ENCODE measurements at regions of chr5 and their contacts with region 1.

Region 1: DNA sequence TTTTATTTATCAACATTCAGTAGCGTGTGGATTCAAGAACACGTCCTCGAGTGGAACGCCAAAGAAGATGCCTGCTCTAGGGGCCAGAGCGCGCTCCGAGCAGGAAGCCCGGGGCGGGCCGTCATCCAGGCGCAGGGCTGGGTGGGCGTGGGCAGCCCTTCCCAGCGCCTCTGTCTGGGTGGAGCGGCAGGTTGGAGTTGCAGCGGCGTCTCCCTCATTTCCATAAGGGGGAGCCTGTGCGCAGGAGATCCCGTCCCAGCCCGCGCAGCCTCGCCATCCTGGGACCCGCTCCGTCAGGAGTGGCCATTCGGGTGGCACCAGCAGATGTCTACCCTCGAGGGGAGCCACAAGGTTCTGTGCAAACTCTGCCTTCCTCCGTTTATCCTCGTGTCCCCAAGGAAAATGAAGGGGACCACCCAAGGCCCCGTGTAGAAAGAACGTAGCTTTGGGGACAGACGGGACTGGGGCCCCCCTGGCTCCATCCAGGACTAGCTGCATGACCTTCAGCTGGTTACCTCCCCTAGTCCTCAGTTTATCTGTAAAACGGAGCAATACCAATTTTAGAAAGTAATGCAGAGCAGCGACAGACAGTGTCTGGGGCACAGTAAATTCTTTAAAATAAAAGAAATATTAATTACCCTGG is 155.5 kb upstream of the SMIM23 start:
- DNase-seq: peak; percentile 54
- H3K4me3 ChIP-seq: peak overlapping the region; percentile 27
- H3K27ac ChIP-seq: no peak overlapping the region
- H3K27me3 ChIP-seq: peaks cover 4% of the 10 kb centered on the region
- CTCF ChIP-seq: peak; percentile 83

Region 2: GRCh38 chr5:171418316-171418981 is 211.7 kb before region 1 on chr5:
- in situ Hi-C with region 1: loop called (anchors 25 kb)
- DNase-seq: peak; percentile 79
- H3K4me3 ChIP-seq: peak overlapping the region; percentile 40
- H3K27ac ChIP-seq: no peak overlapping the region
- H3K27me3 ChIP-seq: peaks cover 10% of the 10 kb centered on the region
- CTCF ChIP-seq: peak; percentile 96

Region 3: GRCh38 chr5:171484460-171484899 is 145.7 kb before region 1 on chr5:
- in situ Hi-C with region 1: no loop called
- DNase-seq: peak; percentile 6
- H3K4me3 ChIP-seq: no peak overlapping the region
- H3K27ac ChIP-seq: no peak overlapping the region
- H3K27me3 ChIP-seq: peaks cover 5% of the 10 kb centered on the region
- CTCF ChIP-seq: peak; percentile 89

Region 4: DNA sequence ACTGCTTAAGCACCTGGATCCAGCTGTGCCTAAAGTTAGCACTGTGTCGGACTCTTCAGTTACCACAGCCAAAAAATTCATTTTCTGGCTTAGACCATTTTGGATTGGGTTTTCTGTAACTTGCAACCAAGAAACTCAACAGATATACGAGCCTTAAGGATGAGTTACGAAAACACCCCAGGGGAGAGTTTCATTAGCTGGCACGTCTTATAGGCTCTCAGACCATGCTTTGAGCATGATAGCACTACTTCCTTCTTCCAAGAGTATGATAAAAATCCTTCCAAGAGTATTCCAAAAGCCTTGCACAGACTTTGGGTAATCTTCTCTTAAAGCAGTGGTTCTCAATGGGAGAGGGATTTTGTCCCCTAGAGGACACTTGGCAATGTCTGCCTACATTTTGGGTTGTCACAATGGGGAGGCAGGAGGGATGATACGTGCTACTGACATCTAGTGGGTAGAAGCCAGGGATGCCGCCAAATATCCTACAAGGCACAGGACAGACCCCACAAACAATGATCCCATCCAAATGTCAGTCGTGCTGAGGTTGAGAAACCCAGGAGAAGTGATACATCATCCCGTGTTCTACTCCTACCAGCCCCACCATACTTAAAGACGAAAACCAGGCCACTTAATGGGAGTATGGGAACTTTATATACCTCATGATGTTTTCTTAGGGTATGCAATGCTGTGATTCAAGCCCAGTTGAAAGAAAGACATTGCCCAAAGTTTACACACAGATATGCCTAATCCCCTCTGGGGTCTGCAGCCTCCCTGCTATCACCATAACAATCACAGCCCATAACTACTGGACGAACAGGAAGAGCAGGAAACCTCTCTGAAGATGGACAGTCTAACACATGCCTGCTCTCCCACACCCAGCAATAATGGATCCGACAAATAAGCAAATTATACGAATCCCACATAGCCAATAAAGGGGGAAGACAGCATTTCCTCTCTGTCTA is 220.5 kb after region 1 on chr5:
- in situ Hi-C with region 1: loop called (anchors 25 kb)
- DNase-seq: peak; percentile 20
- H3K4me3 ChIP-seq: no peak overlapping the region
- H3K27ac ChIP-seq: no peak overlapping the region
- H3K27me3 ChIP-seq: no peaks in the 10 kb centered on the region
- CTCF ChIP-seq: peak; percentile 64